GM10248 (cell line): ENCODE measurements at regions of chr11 and their contacts with region 1.

Region 1: DNA sequence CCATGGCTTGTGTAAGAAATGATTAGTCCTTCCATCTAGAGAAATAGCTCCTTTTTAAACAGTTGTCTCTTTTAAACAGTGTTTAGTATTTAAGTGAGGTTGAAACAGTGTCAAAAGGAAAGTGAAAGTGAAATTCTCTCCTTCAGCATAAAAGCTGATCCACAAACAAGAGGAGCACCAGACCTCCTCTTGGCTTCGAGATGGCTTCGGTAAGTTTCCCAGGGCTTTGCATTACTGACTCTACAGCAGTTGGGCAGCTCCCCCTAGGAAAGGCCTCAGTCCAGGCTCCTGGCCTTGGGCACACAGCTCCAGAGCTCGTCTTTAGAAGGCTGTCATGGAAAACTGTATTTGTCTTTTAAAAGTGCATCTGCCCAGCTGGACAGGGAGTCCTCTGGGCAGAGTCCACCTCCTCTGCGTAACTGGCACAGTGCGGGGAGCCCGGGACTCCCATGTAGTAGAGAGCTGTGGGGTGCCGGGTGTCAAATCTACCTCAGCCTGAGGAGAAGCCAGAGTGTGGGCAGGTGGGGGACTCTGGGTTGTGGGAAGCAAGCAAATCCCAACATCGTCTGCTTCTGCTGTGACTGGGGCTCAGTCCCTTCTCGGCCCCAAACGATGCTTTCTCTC is at the start of gene PLAAT4:
- DNase-seq: peak; percentile 72
- CTCF ChIP-seq: no peak

Region 2: GRCh38 chr11:63503492-63503891 is 33.3 kb before region 1 on chr11:
- CTCF ChIA-PET with region 1: no interaction called
- POLR2A ChIA-PET with region 1: no interaction called
- DNase-seq: no peak
- CTCF ChIP-seq: no peak

Region 3: DNA sequence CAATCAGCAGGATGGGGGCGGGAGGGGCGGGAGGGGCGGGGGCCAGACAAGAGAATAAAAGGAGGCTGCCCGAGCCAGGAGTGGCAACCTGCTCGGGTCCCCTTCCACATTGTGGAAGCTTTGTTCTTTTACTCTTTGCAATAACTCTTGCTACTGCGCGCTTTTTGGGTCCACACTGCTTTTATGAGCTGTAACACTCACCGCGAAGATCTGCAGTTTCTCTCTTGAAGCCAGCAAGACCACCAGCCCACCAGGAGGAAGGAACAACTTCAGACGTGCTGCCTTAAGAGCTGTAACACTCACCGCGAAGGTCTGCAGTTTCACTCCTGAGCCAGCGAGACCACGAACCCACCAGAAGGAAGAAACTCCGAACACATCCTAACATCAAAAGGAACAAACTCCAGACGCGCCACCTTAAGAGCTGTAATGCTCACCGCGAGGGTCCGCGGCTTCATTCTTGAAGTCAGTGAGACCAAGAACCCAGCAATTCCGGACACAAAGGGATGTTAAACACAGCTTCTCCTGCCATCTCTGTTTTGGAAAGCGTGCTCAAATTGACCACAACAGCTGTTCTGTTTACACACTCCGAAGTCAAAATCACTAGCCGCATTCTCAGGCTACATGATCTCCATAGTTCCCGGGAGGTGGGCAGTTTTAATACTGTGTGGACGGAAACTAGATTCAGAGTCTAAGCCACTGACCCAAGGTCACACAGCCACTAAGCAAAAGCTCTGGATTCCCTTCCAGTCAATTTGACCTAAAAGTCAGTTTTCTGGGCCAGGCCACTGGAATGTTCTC is 14.5 kb after region 1 on chr11:
- CTCF ChIA-PET with region 1: interaction called, 11 read pairs
- POLR2A ChIA-PET with region 1: interaction called, 3 read pairs
- DNase-seq: no peak
- CTCF ChIP-seq: no peak